ENCODE measurements at regions of chr14 and their contacts with region 1.

Region 1: DNA sequence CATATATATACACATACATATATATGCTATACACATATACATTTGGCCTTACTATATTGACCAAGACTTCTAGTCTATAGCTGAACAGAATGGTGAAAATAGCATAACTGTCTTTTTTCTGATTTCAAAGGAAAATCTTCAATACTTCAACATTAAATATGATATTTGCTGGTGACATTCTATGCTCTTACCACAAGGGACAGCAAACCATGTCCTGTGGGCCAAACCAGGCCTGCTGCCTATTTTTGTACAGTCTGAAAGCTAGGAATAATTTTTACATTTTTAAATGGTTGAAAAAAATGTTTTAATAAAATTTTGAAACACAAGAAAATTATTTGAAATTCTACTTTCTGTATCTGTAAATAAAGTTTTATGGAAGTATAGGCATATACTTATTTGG is 63.6 kb downstream of the EML5 start:
- DNase-seq: no peak
- H3K4me3 ChIP-seq: no peak overlapping the region
- H3K27ac ChIP-seq: no peak overlapping the region
- H3K4me1 ChIP-seq: no peaks in the 10 kb centered on the region
- H3K27me3 ChIP-seq: no peaks in the 10 kb centered on the region
- CTCF ChIP-seq: no peak
- POLR2A ChIP-seq: no peak

Region 2: GRCh38 chr14:86858031-86858430 is 1871.1 kb before region 1 on chr14:
- intact Hi-C with region 1: no loop called
- DNase-seq: no peak
- H3K4me3 ChIP-seq: no peak overlapping the region
- H3K27ac ChIP-seq: no peak overlapping the region
- H3K4me1 ChIP-seq: no peaks in the 10 kb centered on the region
- H3K27me3 ChIP-seq: no peaks in the 10 kb centered on the region
- CTCF ChIP-seq: no peak
- POLR2A ChIP-seq: no peak

Region 3: DNA sequence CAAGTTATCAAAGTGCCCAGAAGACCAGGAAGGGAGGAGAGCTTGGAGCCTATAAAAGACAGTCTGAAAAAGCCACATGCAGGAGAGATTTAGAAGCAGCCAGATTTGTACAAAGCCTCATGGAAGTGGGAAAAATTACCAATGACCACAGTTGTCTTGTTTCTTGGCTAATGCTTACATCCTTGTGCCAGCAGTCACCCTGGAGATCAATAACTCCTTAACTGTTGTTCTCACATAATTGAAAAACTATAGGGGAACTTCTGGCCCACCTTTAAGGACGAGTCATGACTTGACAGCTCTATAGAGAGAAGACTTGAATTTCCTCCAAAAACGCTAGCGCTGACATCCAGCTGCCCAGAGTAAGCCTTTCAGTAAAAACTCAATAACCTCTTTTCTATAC is 1049.3 kb before region 1 on chr14:
- intact Hi-C with region 1: loop called (anchors 5 kb)
- DNase-seq: no peak
- H3K4me3 ChIP-seq: no peak overlapping the region
- H3K27ac ChIP-seq: no peak overlapping the region
- H3K4me1 ChIP-seq: no peaks in the 10 kb centered on the region
- H3K27me3 ChIP-seq: no peaks in the 10 kb centered on the region
- CTCF ChIP-seq: no peak
- POLR2A ChIP-seq: no peak

Measured in vagina (tissue), 2 donors.